Tibial artery (tissue), 4 donors: ENCODE measurements at regions of chr17 and their contacts with region 1.

Region 1: GRCh38 chr17:56939901-56940343 is 20.9 kb downstream of the COIL start:
- DNase-seq: no peak
- H3K4me3 ChIP-seq: no peak overlapping the region
- H3K27ac ChIP-seq: no peak overlapping the region
- H3K4me1 ChIP-seq: no peaks in the 10 kb centered on the region
- H3K27me3 ChIP-seq: no peaks in the 10 kb centered on the region
- CTCF ChIP-seq: peak; percentile 65 to 75

Region 2: DNA sequence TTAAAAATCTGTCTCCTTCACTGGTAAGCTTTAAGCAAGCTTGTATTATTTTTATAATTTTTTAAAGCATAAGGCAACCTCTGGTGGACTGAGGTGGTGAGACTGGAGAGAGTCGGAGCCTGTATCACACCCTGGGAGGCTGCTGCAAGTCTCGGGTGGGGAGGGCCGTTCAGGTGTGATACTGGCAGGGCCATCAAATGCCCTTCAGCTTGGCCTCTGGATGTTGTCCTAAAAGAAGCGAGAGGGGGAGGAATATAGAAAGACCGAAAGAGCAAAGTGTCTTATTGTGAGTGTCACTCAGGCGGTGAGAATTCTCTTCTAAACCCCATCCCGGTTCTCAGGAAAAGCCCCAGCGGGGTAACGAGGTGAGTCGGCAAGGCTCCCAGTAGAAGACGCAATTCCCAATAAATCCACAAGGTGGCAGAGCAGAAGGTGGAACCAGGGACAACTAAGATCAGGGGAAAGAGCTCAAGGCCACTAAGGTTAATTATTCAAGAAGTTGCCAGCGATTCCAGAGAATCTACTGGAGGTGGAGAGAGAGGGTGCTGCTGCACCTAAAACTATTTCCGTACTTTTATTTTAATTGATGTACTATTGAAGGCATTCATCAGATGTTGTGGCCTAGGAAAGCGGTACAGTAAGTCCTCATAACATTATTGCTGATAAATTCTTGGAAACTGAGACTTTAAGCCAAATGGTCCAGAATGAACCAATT is 120.3 kb before region 1 on chr17:
- intact Hi-C with region 1: loop called (anchors 5 kb)
- DNase-seq: peak in 1 of 2 donors; percentile 64
- H3K4me3 ChIP-seq: no peak overlapping the region
- H3K27ac ChIP-seq: no peak overlapping the region
- H3K4me1 ChIP-seq: peaks cover 0 to 4% (median 4%) of the 10 kb centered on the region in 4 donors
- H3K27me3 ChIP-seq: no peaks in the 10 kb centered on the region
- CTCF ChIP-seq: peak; percentile 81 to 82

Region 3: GRCh38 chr17:56891784-56892183 is 48.1 kb before region 1 on chr17:
- intact Hi-C with region 1: loop called (anchors 5 kb)
- DNase-seq: no peak
- H3K4me3 ChIP-seq: no peak overlapping the region
- H3K27ac ChIP-seq: no peak overlapping the region
- H3K4me1 ChIP-seq: no peaks in the 10 kb centered on the region
- H3K27me3 ChIP-seq: no peaks in the 10 kb centered on the region
- CTCF ChIP-seq: peak; percentile 45